ENCODE measurements at regions of chr15 and their contacts with region 1.

Region 1: DNA sequence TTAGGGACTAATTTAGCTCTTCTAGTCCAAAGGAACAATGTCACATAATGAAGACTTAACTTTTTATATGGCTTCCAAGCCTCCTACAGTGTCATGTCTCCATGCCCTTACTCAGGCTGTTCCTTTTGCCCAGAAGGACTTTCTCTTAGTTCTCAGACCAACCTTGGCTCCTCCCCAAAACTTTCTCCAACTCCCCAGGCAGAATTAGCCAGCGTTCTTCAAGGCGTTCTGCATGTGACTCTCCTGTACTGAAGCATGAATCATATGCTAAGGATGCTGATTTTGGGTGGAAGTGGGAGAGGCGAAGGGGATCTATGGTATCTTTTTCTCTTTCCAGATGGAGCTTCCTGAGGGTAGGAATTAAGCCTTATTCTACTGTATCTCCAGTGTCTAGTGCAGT is 335.1 kb upstream of the ICE2 start:
- DNase-seq: no peak
- H3K4me3 ChIP-seq: no peak overlapping the region
- H3K27ac ChIP-seq: no peak overlapping the region
- H3K4me1 ChIP-seq: no peaks in the 10 kb centered on the region
- H3K27me3 ChIP-seq: no peaks in the 10 kb centered on the region
- CTCF ChIP-seq: no peak

Region 2: DNA sequence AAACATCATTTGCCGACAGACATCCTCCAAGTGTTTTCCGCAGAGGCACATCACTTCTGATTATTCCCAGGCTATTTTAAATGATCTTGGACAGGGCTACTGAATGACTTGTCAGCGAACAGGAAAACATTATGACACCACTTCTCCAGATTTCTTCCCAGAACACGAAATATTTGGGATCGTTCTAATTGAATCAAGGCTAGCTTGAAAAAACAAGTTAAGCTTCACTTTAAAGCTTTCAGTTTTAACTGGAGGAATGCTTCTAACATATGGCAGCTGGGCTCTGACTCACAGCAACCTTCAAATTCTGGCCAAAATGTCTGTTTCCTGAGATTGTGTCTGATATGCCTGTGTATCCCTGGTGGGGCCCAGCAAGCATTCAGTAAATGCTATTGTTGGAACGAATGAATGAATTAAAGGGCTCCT is 208.2 kb before region 1 on chr15:
- CTCF ChIA-PET with region 1: no interaction called
- POLR2A ChIA-PET with region 1: no interaction called
- intact Hi-C with region 1: no loop called
- DNase-seq: no peak
- H3K4me3 ChIP-seq: no peak overlapping the region
- H3K27ac ChIP-seq: no peak overlapping the region
- H3K4me1 ChIP-seq: no peaks in the 10 kb centered on the region
- H3K27me3 ChIP-seq: no peaks in the 10 kb centered on the region
- CTCF ChIP-seq: no peak

Region 3: DNA sequence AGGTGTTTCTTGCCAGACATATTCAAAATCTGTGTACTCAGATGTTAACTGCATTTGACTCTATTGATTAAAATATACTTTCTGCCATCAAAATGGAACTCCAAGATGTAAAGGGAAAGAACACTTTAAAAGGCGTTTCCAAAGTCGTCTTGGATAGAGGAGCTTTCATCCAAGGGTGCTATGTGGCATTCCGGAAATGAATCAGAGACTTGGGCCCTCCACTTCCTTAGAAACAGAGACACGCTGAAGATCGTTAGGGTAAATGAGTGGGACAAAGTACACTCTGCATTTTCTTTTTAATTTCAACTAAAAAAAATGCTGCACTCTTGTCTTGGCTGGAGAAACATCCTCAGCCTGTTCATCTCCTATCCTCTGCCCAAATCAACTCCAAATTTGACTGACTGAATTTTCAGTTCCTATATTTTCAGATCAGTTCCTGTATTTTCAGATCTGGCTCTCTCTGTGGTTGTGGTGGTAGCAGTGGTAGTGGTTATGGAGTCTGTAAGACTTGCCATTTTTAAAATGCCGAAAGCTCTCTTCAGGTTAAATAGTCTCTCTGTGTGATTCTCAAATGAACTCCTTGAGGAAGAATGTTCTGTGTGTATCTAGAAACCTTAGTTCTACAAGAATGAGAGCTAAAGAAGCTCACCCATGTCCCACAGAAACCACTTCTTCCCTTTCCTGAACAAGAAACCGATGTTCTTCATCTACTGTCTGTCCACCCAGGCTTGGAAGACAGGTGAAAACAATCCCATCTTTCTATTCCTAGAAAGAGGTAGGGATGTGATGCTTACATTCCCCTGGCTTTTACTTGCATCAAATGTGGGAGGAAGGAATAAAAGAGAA is 178.3 kb before region 1 on chr15:
- CTCF ChIA-PET with region 1: no interaction called
- POLR2A ChIA-PET with region 1: interaction called, 11 read pairs
- intact Hi-C with region 1: no loop called
- DNase-seq: no peak
- H3K4me3 ChIP-seq: no peak overlapping the region
- H3K27ac ChIP-seq: no peak overlapping the region
- H3K4me1 ChIP-seq: no peaks in the 10 kb centered on the region
- H3K27me3 ChIP-seq: no peaks in the 10 kb centered on the region
- CTCF ChIP-seq: no peak

Region 4: GRCh38 chr15:61112231-61112630 is 298.2 kb after region 1 on chr15:
- CTCF ChIA-PET with region 1: no interaction called
- POLR2A ChIA-PET with region 1: no interaction called
- intact Hi-C with region 1: no loop called
- DNase-seq: no peak
- H3K4me3 ChIP-seq: no peak overlapping the region
- H3K27ac ChIP-seq: no peak overlapping the region
- H3K4me1 ChIP-seq: no peaks in the 10 kb centered on the region
- H3K27me3 ChIP-seq: no peaks in the 10 kb centered on the region
- CTCF ChIP-seq: no peak

Measured in PC-9 (cell line).